Activated naive CD4-positive, alpha-beta T cell treated with anti-CD3 and anti-CD28 coated beads for 36 hours (primary cell): ENCODE measurements at regions of chr3 and their contacts with region 1.

Region 1: DNA sequence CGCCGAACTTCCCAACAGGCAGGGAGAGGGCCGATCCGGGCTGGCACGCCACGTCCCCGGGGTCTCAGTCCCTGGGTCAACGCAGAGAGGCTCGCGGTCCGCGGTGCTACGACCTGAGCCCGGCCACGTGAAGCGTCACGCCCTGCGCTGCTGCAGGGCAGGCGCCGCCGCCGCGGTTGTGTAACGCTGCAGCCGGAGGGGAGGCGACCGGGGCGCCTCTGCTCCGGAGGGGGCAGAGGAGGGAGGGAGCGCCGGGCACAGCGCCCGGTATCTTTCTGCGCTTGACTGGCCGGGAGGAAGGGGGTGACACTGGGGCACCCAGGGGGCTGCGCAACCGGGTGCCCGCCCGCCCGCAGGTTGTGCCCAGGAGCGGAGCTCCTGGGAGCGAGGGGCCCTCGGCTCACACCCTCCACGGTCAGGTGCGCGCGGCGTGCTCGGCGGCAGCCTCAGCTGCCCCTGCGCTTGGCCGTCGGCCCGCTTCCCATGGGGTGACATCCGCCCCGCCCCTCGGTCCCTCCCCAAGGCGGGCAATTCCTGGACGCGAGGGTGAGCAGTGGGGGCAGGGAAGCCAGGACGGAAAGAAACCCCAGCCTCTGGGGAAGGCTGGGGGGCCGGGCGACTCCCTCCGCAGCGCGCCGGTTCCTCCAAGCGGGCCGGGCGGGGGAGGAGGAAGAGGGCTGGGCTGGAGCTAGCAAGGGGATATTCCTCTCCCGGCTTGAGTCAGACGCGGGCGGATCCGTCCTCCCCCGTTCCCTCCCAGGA is 852 bp upstream of the BHLHE40 start:
- DNase-seq: peak; percentile 62
- H3K4me3 Mint-ChIP-seq: peak overlapping the region; percentile 96
- H3K27ac Mint-ChIP-seq: peak overlapping the region; percentile 98
- H3K4me1 Mint-ChIP-seq: peaks cover 53% of the 10 kb centered on the region
- H3K27me3 Mint-ChIP-seq: no peaks in the 10 kb centered on the region

Region 2: DNA sequence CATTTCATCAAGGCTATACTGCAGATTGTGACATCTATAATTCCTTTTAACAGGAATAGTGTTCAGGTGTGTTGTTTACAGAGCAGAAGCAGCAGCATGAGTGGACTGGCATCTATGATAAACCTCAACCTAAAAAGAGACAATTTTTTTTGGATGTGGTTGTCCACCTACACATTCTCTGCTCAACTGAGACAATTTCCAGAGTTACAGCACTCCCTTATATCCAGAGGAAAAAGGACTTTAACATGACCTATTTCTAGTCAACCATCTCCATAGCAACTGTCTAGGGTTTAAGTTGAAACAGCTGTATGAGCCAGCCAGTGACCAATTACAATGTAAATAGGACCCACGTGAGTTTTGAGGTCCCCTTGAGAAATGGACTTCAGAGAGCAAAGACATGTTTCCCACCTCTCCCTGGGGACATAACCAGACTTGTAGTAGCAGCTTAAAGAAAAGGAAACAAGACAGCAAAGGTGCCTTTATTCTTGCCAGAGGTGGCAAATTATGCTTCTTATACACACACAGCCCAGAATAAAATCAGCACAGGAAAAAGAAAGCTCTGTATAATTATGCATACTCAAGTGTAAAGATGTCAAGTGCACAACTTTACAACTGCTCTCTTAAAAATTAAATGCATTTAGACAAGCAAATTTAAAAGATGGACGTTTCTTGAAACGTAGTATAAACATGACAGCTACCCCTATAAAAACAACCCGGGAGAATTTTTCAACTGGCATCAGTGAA is 551.6 kb before region 1 on chr3:
- CTCF ChIA-PET with region 1: no interaction called
- intact Hi-C with region 1: loop called (anchors 10 kb)
- DNase-seq: no peak
- H3K4me3 Mint-ChIP-seq: no peak overlapping the region
- H3K27ac Mint-ChIP-seq: no peak overlapping the region
- H3K4me1 Mint-ChIP-seq: peaks cover 21% of the 10 kb centered on the region
- H3K27me3 Mint-ChIP-seq: no peaks in the 10 kb centered on the region

Region 3: DNA sequence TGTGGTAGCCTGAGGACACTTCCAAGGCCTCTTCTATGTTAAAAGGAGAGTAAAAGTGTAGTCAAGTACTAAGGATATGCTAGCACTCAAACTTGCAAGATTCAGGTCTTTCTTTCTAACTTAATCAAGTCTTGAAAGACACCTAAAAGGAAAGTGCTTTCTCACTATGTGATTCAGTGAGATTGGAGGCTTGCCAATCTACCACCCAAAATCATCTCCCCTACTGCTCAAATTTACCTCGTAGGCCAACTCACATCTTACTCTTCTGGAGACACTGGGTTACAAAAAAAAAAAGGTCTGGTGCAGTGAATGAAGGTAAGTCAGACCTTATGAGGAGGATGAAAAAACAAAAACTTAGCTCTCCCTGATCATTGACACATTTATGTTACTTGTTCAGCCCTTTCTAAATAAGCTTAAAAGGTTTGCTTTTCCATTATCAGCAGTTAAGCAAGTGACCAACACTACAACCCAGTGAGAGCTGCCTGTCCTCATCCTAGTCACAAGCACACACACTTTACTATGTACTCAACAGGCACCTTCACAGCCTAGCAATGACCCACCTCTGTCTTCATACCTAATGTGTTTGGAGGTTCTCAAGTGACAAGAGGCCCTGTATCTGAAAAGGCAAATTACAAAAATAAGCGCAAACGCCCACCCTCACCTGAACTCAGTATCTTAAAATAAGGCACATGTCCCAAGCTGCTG is 530.9 kb before region 1 on chr3:
- CTCF ChIA-PET with region 1: no interaction called
- intact Hi-C with region 1: no loop called
- DNase-seq: no peak
- H3K4me3 Mint-ChIP-seq: no peak overlapping the region
- H3K27ac Mint-ChIP-seq: no peak overlapping the region
- H3K4me1 Mint-ChIP-seq: no peaks in the 10 kb centered on the region
- H3K27me3 Mint-ChIP-seq: no peaks in the 10 kb centered on the region

Region 4: GRCh38 chr3:4722103-4722502 is 256.3 kb before region 1 on chr3:
- CTCF ChIA-PET with region 1: interaction called, 35 read pairs
- intact Hi-C with region 1: loop called (anchors 1 kb)
- DNase-seq: peak; percentile 53
- H3K4me3 Mint-ChIP-seq: no peak overlapping the region
- H3K27ac Mint-ChIP-seq: peak overlapping the region; percentile 30
- H3K4me1 Mint-ChIP-seq: peaks cover 6% of the 10 kb centered on the region
- H3K27me3 Mint-ChIP-seq: no peaks in the 10 kb centered on the region

Region 5: DNA sequence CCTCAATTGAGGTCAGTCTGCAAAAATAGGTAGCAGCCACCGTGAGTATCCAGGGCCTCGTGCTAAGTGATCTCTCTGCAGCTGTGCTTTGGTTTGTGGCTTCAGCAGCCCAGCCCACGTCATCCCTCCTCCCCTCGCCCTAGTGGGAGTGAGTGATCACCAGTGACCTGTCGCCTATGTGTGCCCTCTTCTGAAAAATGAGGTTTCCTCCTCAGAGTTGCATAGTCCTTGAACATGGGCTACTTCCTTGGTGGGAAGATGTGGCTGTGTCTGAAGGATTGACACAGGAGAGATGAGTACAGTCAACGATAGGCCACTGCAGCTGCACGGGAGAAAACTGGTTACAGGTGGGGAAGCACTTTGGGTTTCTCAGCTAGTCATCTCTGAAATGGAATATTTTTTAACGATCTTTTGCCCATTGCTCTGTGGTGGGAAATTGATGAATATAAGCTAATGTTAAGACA is 143.9 kb before region 1 on chr3:
- CTCF ChIA-PET with region 1: interaction called, 29 read pairs
- intact Hi-C with region 1: loop called (anchors 1 kb)
- DNase-seq: peak; percentile 84
- H3K4me3 Mint-ChIP-seq: peak overlapping the region; percentile 13
- H3K27ac Mint-ChIP-seq: peak overlapping the region; percentile 93
- H3K4me1 Mint-ChIP-seq: peaks cover 85% of the 10 kb centered on the region
- H3K27me3 Mint-ChIP-seq: no peaks in the 10 kb centered on the region

Region 6: DNA sequence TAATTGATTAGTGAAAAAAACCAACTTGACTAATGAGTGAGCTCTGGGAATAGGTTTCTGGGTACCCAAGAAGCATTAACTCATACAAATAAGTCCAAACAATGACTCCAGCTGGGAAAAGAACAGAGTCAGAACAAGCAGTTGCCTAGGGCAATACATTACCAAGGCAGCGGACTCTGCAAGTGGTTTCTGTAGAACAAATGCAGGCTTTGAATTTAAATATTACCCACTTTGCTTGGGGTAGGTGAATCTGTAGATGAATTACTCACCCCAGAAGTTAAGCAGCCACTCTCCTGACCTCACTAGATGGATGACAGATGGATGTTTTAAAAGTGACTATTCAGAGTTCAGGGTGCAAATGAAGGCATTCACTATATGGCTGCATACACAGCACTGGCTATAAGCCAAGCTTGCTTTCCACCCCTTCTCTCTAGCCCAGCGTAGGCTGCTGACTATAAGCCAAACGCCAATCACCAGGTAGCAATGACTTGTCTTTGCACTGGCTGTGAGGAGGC is 72.2 kb before region 1 on chr3:
- CTCF ChIA-PET with region 1: interaction called, 11 read pairs
- intact Hi-C with region 1: loop called (anchors 1 kb)
- DNase-seq: peak; percentile 61
- H3K4me3 Mint-ChIP-seq: no peak overlapping the region
- H3K27ac Mint-ChIP-seq: no peak overlapping the region
- H3K4me1 Mint-ChIP-seq: peaks cover 72% of the 10 kb centered on the region
- H3K27me3 Mint-ChIP-seq: no peaks in the 10 kb centered on the region

Region 7: DNA sequence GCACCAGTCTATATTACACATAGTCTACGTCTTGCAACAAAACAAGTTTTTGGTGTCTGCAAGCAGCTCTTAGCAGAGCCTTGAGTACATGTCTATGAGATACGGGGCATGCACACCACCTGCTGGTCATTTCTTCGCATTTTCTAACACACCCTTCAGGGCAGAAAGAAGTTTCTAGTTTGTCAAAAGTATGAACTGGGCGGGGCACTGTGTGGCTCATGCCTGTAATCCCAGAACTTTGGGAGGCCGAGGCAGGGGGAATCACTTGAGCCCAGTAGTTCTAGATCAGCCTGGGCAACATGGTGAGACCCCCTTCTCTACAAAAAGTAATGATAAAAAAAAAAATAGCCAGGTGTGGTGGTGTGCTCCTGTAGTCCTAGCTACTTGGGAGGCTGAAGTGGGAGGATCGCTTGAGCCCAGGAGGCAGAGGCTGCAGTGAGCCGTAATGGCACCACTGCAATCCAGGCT is 79.5 kb after region 1 on chr3:
- CTCF ChIA-PET with region 1: interaction called, 7 read pairs
- intact Hi-C with region 1: loop called (anchors 1 kb)
- DNase-seq: peak; percentile 91
- H3K4me3 Mint-ChIP-seq: no peak overlapping the region
- H3K27ac Mint-ChIP-seq: no peak overlapping the region
- H3K4me1 Mint-ChIP-seq: peaks cover 5% of the 10 kb centered on the region
- H3K27me3 Mint-ChIP-seq: no peaks in the 10 kb centered on the region

Region 8: GRCh38 chr3:5330152-5330810 is 351.9 kb after region 1 on chr3:
- CTCF ChIA-PET with region 1: no interaction called
- intact Hi-C with region 1: loop called (anchors 5 kb)
- DNase-seq: peak; percentile 63
- H3K4me3 Mint-ChIP-seq: no peak overlapping the region
- H3K27ac Mint-ChIP-seq: peak overlapping the region; percentile 15
- H3K4me1 Mint-ChIP-seq: peaks cover 23% of the 10 kb centered on the region
- H3K27me3 Mint-ChIP-seq: peaks cover 3% of the 10 kb centered on the region